SK-N-SH (cell line): ENCODE measurements at regions of chr3 and their contacts with region 1.

Region 1: GRCh38 chr3:30934208-30934550 is 39.7 kb upstream of the GADL1 start:
- DNase-seq: peak; percentile 14
- H3K4me3 ChIP-seq: no peak overlapping the region
- H3K27ac ChIP-seq: no peak overlapping the region
- H3K4me1 ChIP-seq: no peaks in the 10 kb centered on the region
- H3K27me3 ChIP-seq: no peaks in the 10 kb centered on the region
- CTCF ChIP-seq: peak; percentile 47
- EP300 ChIP-seq: no peak
- RAD21 ChIP-seq: peak; percentile 77

Region 2: GRCh38 chr3:30548600-30548999 is 385.6 kb before region 1 on chr3:
- CTCF ChIA-PET with region 1: no interaction called
- POLR2A ChIA-PET with region 1: no interaction called
- DNase-seq: peak; percentile 32
- H3K4me3 ChIP-seq: no peak overlapping the region
- H3K27ac ChIP-seq: no peak overlapping the region
- H3K4me1 ChIP-seq: peaks cover 5 to 22% of the 10 kb centered on the region in 2 experiments
- H3K27me3 ChIP-seq: no peaks in the 10 kb centered on the region
- CTCF ChIP-seq: no peak
- EP300 ChIP-seq: no peak
- RAD21 ChIP-seq: no peak

Region 3: GRCh38 chr3:30804984-30805383 is 129.2 kb before region 1 on chr3:
- CTCF ChIA-PET with region 1: no interaction called
- POLR2A ChIA-PET with region 1: no interaction called
- DNase-seq: no peak
- H3K4me3 ChIP-seq: no peak overlapping the region
- H3K27ac ChIP-seq: no peak overlapping the region
- H3K4me1 ChIP-seq: no peaks in the 10 kb centered on the region
- H3K27me3 ChIP-seq: no peaks in the 10 kb centered on the region; the same call in 1 of the 2 replicates
- CTCF ChIP-seq: no peak
- EP300 ChIP-seq: no peak
- RAD21 ChIP-seq: no peak

Region 4: GRCh38 chr3:30835667-30836066 is 98.5 kb before region 1 on chr3:
- CTCF ChIA-PET with region 1: no interaction called
- POLR2A ChIA-PET with region 1: no interaction called
- DNase-seq: no peak
- H3K4me3 ChIP-seq: no peak overlapping the region
- H3K27ac ChIP-seq: no peak overlapping the region
- H3K4me1 ChIP-seq: no peaks in the 10 kb centered on the region
- H3K27me3 ChIP-seq: no peaks in the 10 kb centered on the region
- CTCF ChIP-seq: no peak
- EP300 ChIP-seq: no peak
- RAD21 ChIP-seq: no peak

Region 5: DNA sequence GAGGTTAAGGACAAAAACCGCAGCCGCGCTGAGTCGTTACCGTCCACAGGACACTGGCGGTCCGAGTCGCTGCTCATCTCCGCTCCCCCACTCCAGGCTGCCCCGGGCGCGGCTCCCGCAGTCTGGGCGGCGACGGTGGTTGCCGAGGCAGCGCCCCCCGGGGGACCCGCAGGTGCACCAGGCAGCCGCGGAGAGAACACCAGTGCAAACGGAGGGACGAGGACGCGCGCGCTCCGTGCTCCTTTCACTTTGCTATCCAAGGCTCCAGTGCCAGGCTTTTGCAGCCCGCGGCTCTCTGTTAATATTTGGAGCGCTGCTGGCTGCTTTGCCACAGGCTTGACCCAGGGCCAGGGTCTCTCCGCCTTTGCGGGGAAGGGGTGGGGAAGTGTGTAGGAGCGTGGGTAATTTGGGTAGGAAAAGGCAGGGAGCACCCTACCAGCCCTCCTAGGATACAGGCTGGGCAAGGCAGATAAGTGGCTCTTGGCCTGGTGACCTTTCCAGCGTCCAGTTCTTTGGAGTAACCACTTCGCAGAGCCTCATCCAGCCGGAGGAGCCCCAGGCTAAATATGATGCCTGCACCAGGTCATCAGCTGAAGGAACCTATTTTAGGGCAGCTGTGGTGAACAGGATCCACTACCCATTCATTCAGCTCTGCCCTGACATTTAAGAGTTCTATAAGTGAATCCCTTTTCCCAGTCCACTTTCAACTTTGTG is 39.5 kb before region 1 on chr3 and contains the start of gene GADL1:
- CTCF ChIA-PET with region 1: interaction called, 13 read pairs
- POLR2A ChIA-PET with region 1: no interaction called
- DNase-seq: peak; percentile 73
- H3K4me3 ChIP-seq: peak within 1 kb of the TSS; percentile 59 to 68
- H3K27ac ChIP-seq: no peak within 1 kb of the TSS
- H3K4me1 ChIP-seq: peaks cover 3 to 7% of the 10 kb centered on the region in 2 experiments; a peak in 2 of 4 replicates
- H3K27me3 ChIP-seq: peaks cover 28% of the 10 kb centered on the region
- CTCF ChIP-seq: no peak
- EP300 ChIP-seq: no peak
- RAD21 ChIP-seq: no peak
- polyA plus RNA-seq, gene GADL1: not detected in 2 replicates

Region 6: GRCh38 chr3:30989276-30990030 is 55.3 kb after region 1 on chr3:
- CTCF ChIA-PET with region 1: no interaction called
- POLR2A ChIA-PET with region 1: no interaction called
- DNase-seq: no peak
- H3K4me3 ChIP-seq: no peak overlapping the region
- H3K27ac ChIP-seq: no peak overlapping the region
- H3K4me1 ChIP-seq: no peaks in the 10 kb centered on the region; a peak in 1 of 4 replicates
- H3K27me3 ChIP-seq: no peaks in the 10 kb centered on the region; the same call in 1 of the 2 replicates
- CTCF ChIP-seq: no peak
- EP300 ChIP-seq: no peak
- RAD21 ChIP-seq: no peak